ENCODE measurements at regions of chr11 and their contacts with region 1.

Region 1: DNA sequence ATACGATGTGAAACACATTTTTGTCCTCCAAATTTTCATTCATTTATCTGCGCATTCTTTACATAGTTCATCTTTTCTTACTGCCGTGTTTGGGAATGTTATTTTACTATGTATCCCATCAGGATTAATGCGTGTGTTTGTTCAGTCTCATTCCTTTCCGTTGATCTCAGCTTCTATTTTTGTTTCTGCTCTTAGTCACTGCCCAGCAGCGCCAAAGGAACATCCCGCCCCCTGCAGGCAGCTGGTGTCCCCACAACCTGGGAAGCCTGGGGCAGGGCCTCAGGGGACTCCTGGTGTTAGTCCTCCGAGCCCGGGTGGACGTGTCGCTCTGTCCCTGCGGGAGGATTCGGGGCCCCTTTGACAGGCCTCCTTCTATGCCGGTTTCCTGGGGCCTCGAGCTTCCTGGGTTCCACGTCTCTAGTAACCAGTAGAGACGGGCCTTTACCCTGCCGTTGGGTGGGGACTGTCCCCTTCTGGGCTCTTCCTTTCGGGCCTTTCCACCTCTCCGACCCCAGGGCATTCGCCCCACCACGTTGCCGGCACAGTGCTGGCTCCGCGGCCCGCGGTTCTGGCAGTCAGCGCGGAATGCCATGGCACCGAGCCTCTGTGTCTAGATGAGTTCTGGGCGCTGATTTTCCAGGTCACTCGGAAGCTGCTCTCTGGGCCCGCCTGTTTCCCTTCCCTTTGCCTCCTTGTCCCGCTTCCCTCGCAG is 39.8 kb downstream of the WEE1 start:
- DNase-seq: peak; percentile 92
- ATAC-seq: peak; percentile 80
- H3K4me3 ChIP-seq: peak overlapping the region; percentile 42 to 58
- H3K27ac ChIP-seq: peak overlapping the region; percentile 92
- H3K4me1 ChIP-seq: peaks cover 29 to 61% of the 10 kb centered on the region in 2 experiments
- H3K27me3 ChIP-seq: no peaks in the 10 kb centered on the region
- CTCF ChIP-seq: peak; percentile 87 to 98 (median 94)
- POLR2A ChIP-seq: no peak
- RAD21 ChIP-seq: peak; percentile 94

Region 2: GRCh38 chr11:9479899-9480298 is 133.4 kb before region 1 on chr11:
- CTCF ChIA-PET with region 1: no interaction called
- POLR2A ChIA-PET with region 1: no interaction called
- RAD21 ChIA-PET with region 1: no interaction called
- intact Hi-C with region 1: no loop called
- DNase-seq: no peak
- ATAC-seq: no peak
- H3K4me3 ChIP-seq: no peak overlapping the region
- H3K27ac ChIP-seq: no peak overlapping the region
- H3K4me1 ChIP-seq: no peaks in the 10 kb centered on the region
- H3K27me3 ChIP-seq: no peaks in the 10 kb centered on the region
- CTCF ChIP-seq: no peak
- POLR2A ChIP-seq: no peak
- RAD21 ChIP-seq: no peak

Region 3: DNA sequence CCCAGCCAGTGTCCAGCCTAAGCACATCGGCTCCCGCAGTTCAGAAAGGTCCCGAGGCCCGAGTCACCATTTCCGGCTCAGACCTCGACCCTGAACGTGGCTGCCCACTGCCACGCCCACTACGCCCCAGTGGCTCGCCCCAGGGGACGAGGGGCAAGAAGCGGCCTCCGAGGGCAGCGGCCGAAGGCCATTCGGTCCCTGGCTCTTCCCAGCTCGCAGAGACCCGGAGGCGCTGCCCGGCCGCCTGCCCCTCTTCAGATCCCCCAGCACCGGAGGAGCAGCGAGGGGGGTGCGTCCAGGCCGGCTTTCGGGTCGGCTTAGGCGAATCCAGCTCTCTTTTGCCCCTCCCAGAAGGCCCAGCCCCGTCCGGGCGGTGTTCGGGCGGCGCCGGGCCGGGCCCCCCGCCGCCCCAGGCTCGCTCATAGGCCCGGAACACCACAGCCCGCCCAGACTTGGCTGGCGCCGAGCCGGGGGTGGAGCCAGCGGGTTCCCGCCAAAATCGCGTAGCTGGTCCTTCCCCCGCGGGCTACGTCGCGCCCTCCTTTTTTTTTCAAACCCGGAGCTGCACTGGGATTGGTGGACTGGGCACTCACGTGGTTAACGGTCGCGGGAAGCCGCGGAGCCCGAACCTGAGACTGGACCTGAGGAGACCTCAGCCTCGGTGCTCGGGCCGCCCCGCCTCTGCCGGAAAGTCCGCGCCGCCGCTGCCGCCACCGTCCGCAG is 40.1 kb before region 1 on chr11 and contains the start of gene WEE1:
- CTCF ChIA-PET with region 1: interaction called, 3 read pairs
- POLR2A ChIA-PET with region 1: interaction called, 3 read pairs
- RAD21 ChIA-PET with region 1: interaction called in 1 of 2 experiments, 3 read pairs
- intact Hi-C with region 1: loop called (anchors 1 kb)
- DNase-seq: peak; percentile 96
- ATAC-seq: peak; percentile 91
- H3K4me3 ChIP-seq: peak within 1 kb of the TSS; percentile 86 to 94
- H3K27ac ChIP-seq: peak within 1 kb of the TSS; percentile 96
- H3K4me1 ChIP-seq: peaks cover 26 to 53% of the 10 kb centered on the region in 2 experiments
- H3K27me3 ChIP-seq: no peaks in the 10 kb centered on the region
- CTCF ChIP-seq: no peak
- POLR2A ChIP-seq: no peak
- RAD21 ChIP-seq: no peak
- total RNA-seq, gene WEE1: 50.8 TPM

Region 4: GRCh38 chr11:9748361-9748970 is 135.2 kb after region 1 on chr11:
- CTCF ChIA-PET with region 1: interaction called, 24 read pairs
- POLR2A ChIA-PET with region 1: interaction called, 4 read pairs
- RAD21 ChIA-PET with region 1: interaction called in 1 of 2 experiments, 3 read pairs
- intact Hi-C with region 1: loop called (anchors 1 kb)
- DNase-seq: peak; percentile 70
- ATAC-seq: peak; percentile 98
- H3K4me3 ChIP-seq: no peak overlapping the region
- H3K27ac ChIP-seq: no peak overlapping the region
- H3K4me1 ChIP-seq: peaks cover 3 to 8% of the 10 kb centered on the region in 2 experiments; a peak in 3 of 4 replicates
- H3K27me3 ChIP-seq: no peaks in the 10 kb centered on the region
- CTCF ChIP-seq: peak; percentile 73 to 96 (median 79)
- POLR2A ChIP-seq: no peak
- RAD21 ChIP-seq: peak; percentile 92